MCF 10A (cell line): ENCODE measurements at regions of chr19 and their contacts with region 1.

Region 1: DNA sequence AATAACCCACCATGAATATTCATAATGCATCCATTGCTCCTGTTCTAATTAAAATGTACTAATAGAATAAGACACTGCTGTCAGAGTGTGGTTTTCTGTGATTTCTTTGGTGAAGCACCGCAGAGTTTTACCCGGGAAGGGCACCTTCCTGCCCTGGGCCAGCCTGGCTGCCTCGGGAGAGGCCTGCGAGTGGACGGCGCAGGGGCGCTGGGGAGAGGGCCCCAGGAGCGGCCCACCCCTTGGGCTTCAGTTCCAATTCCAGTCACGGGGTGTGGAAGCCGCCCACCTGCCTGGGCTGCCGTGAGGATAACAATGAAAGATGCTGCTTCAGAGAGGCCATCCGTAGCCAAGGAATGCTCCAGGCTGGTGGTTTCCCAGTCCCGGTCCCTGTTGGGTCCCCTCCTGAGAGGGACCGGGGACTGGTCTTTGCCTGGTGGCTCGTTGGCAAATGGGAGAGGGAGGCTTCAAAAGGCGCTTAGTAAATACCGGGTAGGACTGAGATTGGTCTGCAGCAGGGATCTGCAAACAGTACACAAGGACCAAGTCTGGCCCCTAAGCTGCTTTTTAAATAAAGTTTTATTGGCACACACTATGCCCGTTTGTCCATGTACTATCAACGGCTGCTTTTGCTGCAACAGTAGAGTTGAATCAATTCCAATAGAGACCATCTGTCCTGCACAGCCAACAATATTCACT is 18.0 kb downstream of the TCF3 start:
- DNase-seq: no peak
- H3K4me3 Mint-ChIP-seq: no peak overlapping the region
- H3K27ac Mint-ChIP-seq: no peak overlapping the region
- H3K4me1 Mint-ChIP-seq: peaks cover 5% of the 10 kb centered on the region
- H3K27me3 Mint-ChIP-seq: no peaks in the 10 kb centered on the region
- CTCF ChIP-seq: no peak

Region 2: GRCh38 chr19:1618157-1619093 is 16.0 kb before region 1 on chr19:
- CTCF ChIA-PET with region 1: no interaction called
- POLR2A ChIA-PET with region 1: no interaction called
- intact Hi-C with region 1: no loop called
- DNase-seq: peak; percentile 47
- H3K4me3 Mint-ChIP-seq: no peak overlapping the region
- H3K27ac Mint-ChIP-seq: peak overlapping the region; percentile 76
- H3K4me1 Mint-ChIP-seq: no peaks in the 10 kb centered on the region
- H3K27me3 Mint-ChIP-seq: no peaks in the 10 kb centered on the region
- CTCF ChIP-seq: peak; percentile 26

Region 3: DNA sequence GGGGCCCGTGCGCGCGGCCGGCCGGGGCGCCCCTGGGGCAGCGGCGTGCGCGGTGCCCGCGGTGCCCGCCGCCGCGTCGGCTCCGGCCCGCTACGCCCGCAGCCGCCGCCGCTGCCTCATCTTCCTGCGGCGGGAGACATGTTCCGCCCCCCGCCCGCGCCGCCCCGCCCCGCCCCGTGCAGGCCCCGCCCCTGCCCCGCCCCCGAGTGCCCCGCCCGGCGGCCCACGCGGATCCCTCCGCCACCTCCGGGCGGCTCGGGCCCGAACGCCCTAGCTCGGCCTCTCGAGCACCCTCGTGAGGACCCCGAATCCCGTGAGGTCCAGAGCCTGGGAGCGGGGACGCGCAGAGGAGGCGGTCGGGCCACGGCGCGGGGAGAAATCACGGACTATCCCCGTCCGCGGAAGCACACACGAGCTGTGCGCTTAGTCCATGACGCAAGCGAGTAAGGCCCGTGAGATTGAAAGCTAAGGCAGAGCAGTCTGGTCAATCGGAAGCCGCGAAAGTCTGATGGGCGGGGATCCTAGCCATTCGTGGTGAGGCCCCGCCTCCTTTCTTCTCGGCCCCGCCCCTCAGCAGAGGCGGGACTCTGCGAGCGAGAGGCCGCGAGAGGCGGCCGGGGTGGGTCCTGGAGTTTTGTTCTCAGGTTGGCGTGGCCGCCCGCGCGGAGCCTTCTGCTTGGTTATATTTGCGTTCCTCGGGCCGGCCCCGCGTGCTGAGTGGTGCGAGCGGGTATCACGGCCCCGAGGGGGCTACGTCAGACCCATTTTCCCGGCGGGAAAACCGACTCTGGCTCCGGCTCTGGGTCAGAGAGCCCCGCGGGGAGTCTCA is 18.3 kb after region 1 on chr19 and contains the start of gene TCF3:
- CTCF ChIA-PET with region 1: interaction called, 5 read pairs
- POLR2A ChIA-PET with region 1: interaction called, 10 read pairs
- intact Hi-C with region 1: no loop called
- DNase-seq: peak; percentile 99
- H3K4me3 Mint-ChIP-seq: peak within 1 kb of the TSS; percentile 75
- H3K27ac Mint-ChIP-seq: peak within 1 kb of the TSS; percentile 89
- H3K4me1 Mint-ChIP-seq: no peaks in the 10 kb centered on the region
- H3K27me3 Mint-ChIP-seq: no peaks in the 10 kb centered on the region
- CTCF ChIP-seq: no peak
- total RNA-seq, gene TCF3: 79.7 and 100 TPM in 2 replicates

Region 4: DNA sequence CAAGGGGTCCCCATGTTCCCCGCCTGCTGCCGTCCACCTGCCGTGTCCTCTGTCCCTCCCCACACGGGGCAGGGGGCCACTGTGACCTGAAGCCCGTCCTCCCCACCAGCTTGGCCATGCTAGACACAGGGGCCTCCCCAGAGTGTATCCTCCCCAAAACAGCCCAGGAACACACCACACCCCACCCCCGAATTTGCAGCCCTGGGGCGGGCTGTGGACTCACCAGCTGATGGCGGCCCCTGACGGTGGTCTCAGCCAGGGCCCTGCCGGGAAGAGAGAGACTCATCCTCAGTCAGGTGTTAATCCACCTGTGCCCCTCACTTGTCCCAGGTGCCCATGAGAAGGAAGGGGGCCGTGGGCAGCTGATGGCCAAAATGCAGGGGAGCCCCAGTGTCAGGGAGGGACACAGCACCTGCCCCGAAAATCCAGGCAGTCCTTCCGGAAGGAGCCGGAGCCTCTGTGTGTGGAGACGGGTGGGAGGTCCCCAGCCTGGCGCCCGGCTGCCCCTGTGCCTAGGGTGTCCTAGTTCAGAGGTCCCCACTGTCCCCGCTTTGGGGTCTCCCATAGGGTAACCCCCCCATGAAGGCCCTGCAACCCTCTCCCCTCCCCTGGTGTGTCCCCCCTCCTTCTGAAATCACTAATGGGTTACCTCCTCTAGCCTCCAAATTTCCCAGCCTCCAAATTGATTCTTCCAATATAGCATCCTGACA is 57.3 kb after region 1 on chr19:
- CTCF ChIA-PET with region 1: no interaction called
- POLR2A ChIA-PET with region 1: no interaction called
- intact Hi-C with region 1: no loop called
- DNase-seq: no peak
- H3K4me3 Mint-ChIP-seq: no peak overlapping the region
- H3K27ac Mint-ChIP-seq: no peak overlapping the region
- H3K4me1 Mint-ChIP-seq: peaks cover 5% of the 10 kb centered on the region
- H3K27me3 Mint-ChIP-seq: peaks cover 23% of the 10 kb centered on the region
- CTCF ChIP-seq: no peak